Tibial artery (tissue), 4 donors: ENCODE measurements at regions of chr6 and their contacts with region 1.

Region 1: DNA sequence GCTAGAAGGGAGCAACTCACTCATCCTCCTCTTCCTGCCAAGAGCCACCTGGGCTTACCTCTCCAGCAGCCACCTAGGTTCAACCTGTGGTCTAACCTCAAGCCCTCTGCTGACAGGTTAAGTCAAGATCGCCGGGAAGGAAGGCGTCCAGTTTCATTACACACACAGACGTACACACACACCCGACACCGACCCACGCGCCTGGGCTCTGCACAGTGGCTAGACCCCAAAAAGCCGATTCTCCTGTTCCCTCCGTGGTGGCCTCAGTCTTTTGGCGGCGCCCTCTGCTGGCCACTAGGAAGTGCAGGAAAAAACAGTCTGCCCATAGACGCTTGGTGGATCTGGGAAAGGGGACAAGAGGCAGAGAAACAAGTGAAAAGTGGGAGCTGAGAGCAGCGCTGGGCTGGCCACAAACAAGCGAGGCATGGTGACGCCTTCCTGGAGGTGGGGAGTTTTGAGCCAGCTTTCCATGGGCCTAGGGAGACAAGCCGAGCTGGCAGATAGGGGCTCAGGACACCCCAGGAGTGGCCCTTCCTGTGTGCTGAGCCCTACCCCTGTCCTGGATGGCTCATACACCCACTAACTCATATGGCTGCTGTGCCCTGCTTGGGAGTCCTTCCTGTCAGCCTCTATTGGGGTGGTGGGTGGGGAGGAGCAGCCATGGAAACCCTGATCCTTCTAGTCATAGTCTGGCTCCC is 52.7 kb downstream of the MRPL14 start:
- DNase-seq: peak; percentile 71 to 86
- H3K4me3 ChIP-seq: no peak overlapping the region
- H3K27ac ChIP-seq: peak overlapping the region; percentile 75 to 76
- H3K4me1 ChIP-seq: peaks cover 0 to 52% (median 36%) of the 10 kb centered on the region in 4 donors
- H3K27me3 ChIP-seq: peaks cover 0 to 8% of the 10 kb centered on the region in 2 donors
- CTCF ChIP-seq: peak; percentile 82 to 87

Region 2: GRCh38 chr6:43667245-43668150 is 407.1 kb before region 1 on chr6:
- intact Hi-C with region 1: loop called (anchors 2 kb)
- DNase-seq: peak; percentile 73 to 88
- H3K4me3 ChIP-seq: no peak overlapping the region
- H3K27ac ChIP-seq: peak overlapping the region; percentile 63 to 74
- H3K4me1 ChIP-seq: peaks cover 0 to 44% (median 33%) of the 10 kb centered on the region in 4 donors
- H3K27me3 ChIP-seq: peaks cover 0 to 6% of the 10 kb centered on the region in 2 donors
- CTCF ChIP-seq: peak; percentile 93 to 94